GM18951 (cell line): ENCODE measurements at regions of chr9 and their contacts with region 1.

Region 1: GRCh38 chr9:111298731-111299598 is 31.1 kb downstream of the OR2K2 start:
- POLR2A ChIP-seq: no peak

Region 2: GRCh38 chr9:110638381-110638954 is 660.5 kb before region 1 on chr9:
- in situ Hi-C with region 1: loop called (anchors 10 kb)
- POLR2A ChIP-seq: no peak

Region 3: DNA sequence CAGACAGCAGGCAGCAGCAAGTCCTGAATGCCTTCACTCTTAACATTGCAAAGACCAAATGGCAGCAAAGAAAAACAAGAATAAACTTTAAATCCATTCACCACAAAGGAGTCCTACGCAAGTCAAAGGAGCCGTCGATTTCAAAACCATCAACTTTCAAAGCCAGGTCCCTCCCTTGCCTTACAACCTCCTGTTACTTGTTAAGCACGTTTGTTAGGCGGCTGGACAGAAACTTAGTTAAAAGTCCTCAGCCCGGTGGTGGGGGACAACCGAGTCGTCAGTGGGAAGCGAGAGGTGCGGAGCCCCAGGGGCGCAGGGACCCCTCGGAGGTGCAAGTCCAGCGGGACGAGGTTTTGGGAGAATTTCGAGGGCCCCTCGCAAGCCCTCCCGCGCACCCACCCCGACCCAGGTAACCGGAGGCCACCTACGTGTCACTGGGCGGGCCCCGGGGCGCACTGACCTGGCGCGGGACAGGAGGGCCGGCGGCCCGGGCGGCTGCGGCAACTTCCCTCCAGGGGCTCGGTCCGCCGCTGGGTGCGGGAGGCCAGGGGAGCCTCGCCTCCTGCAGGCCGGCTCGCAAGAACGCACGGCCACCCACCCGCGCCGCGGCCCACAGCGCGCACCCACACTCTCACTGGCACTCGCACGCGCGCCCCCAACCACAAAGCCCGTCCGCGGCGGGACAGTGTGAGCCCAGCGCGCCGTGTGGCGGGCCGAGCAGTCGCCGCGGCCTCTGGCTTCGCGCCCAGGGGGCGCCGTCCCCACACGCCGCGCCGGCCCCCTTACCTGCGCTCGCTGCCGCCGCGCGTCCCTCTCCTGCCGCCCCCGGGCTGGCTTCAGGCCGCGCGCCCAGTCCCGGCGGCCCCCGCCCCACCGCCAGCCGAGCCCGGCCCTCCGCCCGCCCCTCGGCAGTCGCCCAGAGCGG is 261.3 kb before region 1 on chr9:
- in situ Hi-C with region 1: loop called (anchors 25 kb)
- POLR2A ChIP-seq: no peak

Region 4: DNA sequence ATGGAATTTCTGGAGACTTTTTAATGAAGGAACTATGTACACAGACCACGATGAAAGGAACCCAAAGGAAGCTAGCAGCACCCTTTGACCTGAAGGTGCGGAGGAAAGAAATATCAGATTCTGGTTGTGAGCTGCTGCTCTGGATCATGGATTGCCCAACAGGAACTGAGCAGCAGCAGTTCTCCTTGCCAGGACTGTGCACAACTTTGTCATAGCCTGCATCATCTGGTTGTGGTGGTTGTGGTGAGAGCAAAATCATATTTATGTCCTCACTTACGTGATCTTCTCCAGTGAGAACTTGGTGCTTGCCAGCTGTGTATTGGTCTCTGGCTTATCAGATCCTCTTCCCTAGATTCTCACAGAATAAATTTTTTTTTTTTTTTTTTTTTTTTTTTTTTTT is 190.0 kb before region 1 on chr9:
- in situ Hi-C with region 1: no loop called
- POLR2A ChIP-seq: no peak